Activated CD8-positive, alpha-beta memory T cell treated with anti-CD3 and anti-CD28 coated beads, Interleukin-2, amount 10 ng/mL, durations not matched to agents 7 days and 5 days (primary cell): ENCODE measurements at regions of chr1 and their contacts with region 1.

Region 1: DNA sequence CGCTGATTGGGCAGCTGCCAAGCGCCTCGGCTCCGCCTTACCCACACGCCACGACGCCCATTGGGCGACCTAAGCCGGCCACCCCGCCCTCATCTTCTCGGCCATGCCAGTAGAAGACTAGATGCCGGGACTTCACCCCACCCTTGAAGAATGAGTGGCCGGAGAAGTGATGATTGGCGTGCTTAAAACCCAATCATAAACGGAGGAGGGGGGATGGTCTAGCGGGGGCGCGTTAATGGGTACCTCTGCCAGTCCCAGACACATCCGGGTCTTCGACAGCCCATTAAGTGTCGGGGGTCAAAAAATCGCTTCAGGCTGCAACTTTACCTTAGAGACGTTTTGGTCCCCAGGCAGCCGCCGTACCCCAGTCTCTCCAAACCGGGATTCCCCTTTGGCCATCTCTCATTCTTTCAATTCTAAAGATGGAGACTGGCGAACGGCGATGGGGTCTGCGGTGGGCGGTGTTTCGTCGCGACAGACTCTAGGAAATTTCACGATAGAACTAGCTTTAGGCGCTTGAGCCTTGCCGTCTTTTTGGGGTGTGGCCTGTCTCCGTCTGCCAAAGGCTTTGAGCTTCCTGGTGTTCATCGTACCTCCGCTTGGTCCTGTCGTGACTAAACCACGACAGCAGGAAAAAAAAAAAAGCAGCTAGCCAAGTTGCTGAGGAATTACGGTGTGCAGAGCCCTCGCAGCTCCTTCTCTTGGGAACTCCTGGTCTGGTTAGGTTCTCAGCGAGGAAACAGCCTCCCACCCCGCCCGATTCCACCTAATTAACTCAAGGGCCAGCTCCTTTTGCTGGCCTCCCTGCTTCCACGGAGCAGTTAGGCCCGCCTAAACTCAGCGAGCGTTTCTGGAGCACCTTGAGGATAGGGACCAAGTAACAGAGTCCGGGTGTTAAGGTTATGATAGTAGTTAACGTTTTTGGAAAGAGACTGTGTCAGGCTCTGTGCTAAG is at the start of gene GATAD2B:
- DNase-seq: peak; percentile 100
- ATAC-seq: peak; percentile 95
- H3K4me3 Mint-ChIP-seq: peak within 1 kb of the TSS; percentile 96
- H3K27ac Mint-ChIP-seq: peak within 1 kb of the TSS; percentile 95
- H3K4me1 Mint-ChIP-seq: peaks cover 44% of the 10 kb centered on the region
- H3K27me3 Mint-ChIP-seq: no peaks in the 10 kb centered on the region
- total RNA-seq, gene GATAD2B: 72.5 to 77.9 TPM

Region 2: DNA sequence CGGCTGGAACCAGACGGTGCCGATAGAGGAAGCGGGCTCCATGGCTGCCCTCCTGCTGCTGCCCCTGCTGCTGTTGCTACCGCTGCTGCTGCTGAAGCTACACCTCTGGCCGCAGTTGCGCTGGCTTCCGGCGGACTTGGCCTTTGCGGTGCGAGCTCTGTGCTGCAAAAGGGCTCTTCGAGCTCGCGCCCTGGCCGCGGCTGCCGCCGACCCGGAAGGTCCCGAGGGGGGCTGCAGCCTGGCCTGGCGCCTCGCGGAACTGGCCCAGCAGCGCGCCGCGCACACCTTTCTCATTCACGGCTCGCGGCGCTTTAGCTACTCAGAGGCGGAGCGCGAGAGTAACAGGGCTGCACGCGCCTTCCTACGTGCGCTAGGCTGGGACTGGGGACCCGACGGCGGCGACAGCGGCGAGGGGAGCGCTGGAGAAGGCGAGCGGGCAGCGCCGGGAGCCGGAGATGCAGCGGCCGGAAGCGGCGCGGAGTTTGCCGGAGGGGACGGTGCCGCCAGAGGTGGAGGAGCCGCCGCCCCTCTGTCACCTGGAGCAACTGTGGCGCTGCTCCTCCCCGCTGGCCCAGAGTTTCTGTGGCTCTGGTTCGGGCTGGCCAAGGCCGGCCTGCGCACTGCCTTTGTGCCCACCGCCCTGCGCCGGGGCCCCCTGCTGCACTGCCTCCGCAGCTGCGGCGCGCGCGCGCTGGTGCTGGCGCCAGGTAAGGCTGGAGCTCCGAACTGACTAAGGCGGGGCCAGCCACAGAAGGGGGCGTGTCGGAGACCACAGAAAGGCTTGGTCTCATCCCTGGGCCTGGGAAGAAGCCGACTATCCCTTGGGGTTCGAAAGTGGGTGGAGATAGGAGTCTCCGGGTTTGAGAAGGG is 147.6 kb before region 1 on chr1:
- CTCF ChIA-PET with region 1: interaction called, 18 read pairs
- DNase-seq: peak; percentile 90
- ATAC-seq: peak; percentile 78
- H3K4me3 Mint-ChIP-seq: peak overlapping the region; percentile 87
- H3K27ac Mint-ChIP-seq: peak overlapping the region; percentile 97
- H3K4me1 Mint-ChIP-seq: peaks cover 40% of the 10 kb centered on the region
- H3K27me3 Mint-ChIP-seq: no peaks in the 10 kb centered on the region

Region 3: GRCh38 chr1:153796791-153797659 is 126.2 kb before region 1 on chr1:
- CTCF ChIA-PET with region 1: interaction called, 20 read pairs
- DNase-seq: peak; percentile 91
- ATAC-seq: peak; percentile 75
- H3K4me3 Mint-ChIP-seq: no peak overlapping the region
- H3K27ac Mint-ChIP-seq: peak overlapping the region; percentile 13
- H3K4me1 Mint-ChIP-seq: peaks cover 26% of the 10 kb centered on the region
- H3K27me3 Mint-ChIP-seq: no peaks in the 10 kb centered on the region

Region 4: GRCh38 chr1:153827168-153827964 is 95.9 kb before region 1 on chr1:
- CTCF ChIA-PET with region 1: interaction called, 14 read pairs
- DNase-seq: no peak
- ATAC-seq: no peak
- H3K4me3 Mint-ChIP-seq: no peak overlapping the region
- H3K27ac Mint-ChIP-seq: no peak overlapping the region
- H3K4me1 Mint-ChIP-seq: peaks cover 2% of the 10 kb centered on the region
- H3K27me3 Mint-ChIP-seq: no peaks in the 10 kb centered on the region

Region 5: DNA sequence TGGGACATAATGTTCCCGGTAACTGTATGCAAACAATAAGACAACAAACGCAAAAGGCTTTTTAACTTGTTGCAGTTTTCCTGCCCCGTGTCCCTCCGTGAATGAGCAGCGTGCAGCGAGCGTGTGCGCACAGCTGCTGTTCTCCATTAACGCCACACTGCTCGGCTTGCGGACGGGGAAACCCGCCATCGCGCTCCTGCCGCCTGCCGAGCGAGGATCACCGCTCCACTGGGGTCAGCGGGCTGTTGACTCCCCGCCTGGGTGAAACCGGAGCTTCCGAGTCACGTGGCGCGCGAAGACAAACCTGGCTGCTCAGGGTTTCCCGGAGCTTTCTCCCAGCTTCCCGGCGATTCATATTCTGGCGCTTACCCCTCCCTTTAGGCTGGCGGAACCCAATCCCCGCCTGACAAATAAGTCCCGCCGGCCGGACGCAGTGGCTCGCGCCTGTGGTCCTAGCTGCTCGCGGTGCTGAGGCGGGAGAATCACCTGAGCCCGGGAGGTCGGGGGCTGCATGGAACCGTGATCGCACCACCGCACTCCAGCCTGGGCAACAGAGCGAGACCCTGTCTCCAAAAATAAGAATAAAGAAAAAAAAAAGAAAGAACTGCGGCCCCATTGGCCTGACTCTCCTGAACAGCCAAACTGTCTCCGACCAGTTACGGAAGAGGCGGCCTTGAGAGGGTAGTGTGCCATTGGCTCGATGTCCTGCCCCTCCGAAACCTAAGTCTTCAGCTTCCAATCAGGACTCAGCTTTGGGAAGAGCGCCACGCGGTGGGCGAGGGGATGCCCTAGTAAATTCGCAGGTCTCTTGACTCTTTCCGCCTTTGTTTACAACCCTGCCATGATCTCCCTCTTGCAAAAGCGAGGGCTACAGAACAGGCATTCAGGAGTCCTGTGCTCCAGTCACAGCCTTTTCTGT is 44.1 kb after region 1 on chr1 and contains the start of gene CREB3L4:
- CTCF ChIA-PET with region 1: interaction called, 11 read pairs
- DNase-seq: peak; percentile 92
- ATAC-seq: peak; percentile 86
- H3K4me3 Mint-ChIP-seq: peak within 1 kb of the TSS; percentile 97
- H3K27ac Mint-ChIP-seq: peak within 1 kb of the TSS; percentile 96
- H3K4me1 Mint-ChIP-seq: peaks cover 50% of the 10 kb centered on the region
- H3K27me3 Mint-ChIP-seq: no peaks in the 10 kb centered on the region
- total RNA-seq, gene CREB3L4: 6.3 to 8.5 TPM